Caco-2 (cell line): ENCODE measurements at regions of chrX and their contacts with region 1.

Region 1: GRCh38 chrX:101097546-101098453 is at the start of gene CENPI:
- DNase-seq: peak; percentile 94 to 95
- H3K4me3 ChIP-seq: peak within 1 kb of the TSS; percentile 63
- H3K4me3 Mint-ChIP-seq: peak within 1 kb of the TSS; percentile 86
- H3K27ac Mint-ChIP-seq: peak within 1 kb of the TSS; percentile 82
- H3K4me1 ChIP-seq: no peaks in the 10 kb centered on the region
- H3K4me1 Mint-ChIP-seq: peaks cover 17% of the 10 kb centered on the region
- H3K27me3 ChIP-seq: no peaks in the 10 kb centered on the region
- H3K27me3 Mint-ChIP-seq: no peaks in the 10 kb centered on the region
- CTCF ChIP-seq: no peak
- total RNA-seq, gene CENPI: 19.8 and 21.1 TPM in 2 replicates

Region 2: GRCh38 chrX:100895365-100896075 is 202.3 kb before region 1 on chrX:
- CTCF ChIA-PET with region 1: no interaction called
- POLR2A ChIA-PET with region 1: no interaction called
- intact Hi-C with region 1: loop called (anchors 10 kb)
- DNase-seq: peak; percentile 53
- H3K4me3 ChIP-seq: no peak overlapping the region
- H3K4me3 Mint-ChIP-seq: no peak overlapping the region
- H3K27ac Mint-ChIP-seq: no peak overlapping the region
- H3K4me1 ChIP-seq: peaks cover 7% of the 10 kb centered on the region; the same call in 1 of the 2 replicates
- H3K4me1 Mint-ChIP-seq: peaks cover 13% of the 10 kb centered on the region
- H3K27me3 ChIP-seq: no peaks in the 10 kb centered on the region
- H3K27me3 Mint-ChIP-seq: no peaks in the 10 kb centered on the region
- CTCF ChIP-seq: peak; percentile 36 to 66

Region 3: GRCh38 chrX:100928660-100929613 is 168.9 kb before region 1 on chrX and contains the start of gene XKRX:
- CTCF ChIA-PET with region 1: interaction called, 4 read pairs
- POLR2A ChIA-PET with region 1: interaction called, 7 read pairs
- intact Hi-C with region 1: loop called (anchors 1 kb)
- DNase-seq: peak; percentile 88
- H3K4me3 ChIP-seq: peak within 1 kb of the TSS; percentile 49
- H3K4me3 Mint-ChIP-seq: peak within 1 kb of the TSS; percentile 88
- H3K27ac Mint-ChIP-seq: peak within 1 kb of the TSS; percentile 83
- H3K4me1 ChIP-seq: peaks cover 13% of the 10 kb centered on the region
- H3K4me1 Mint-ChIP-seq: peaks cover 7% of the 10 kb centered on the region
- H3K27me3 ChIP-seq: no peaks in the 10 kb centered on the region
- H3K27me3 Mint-ChIP-seq: no peaks in the 10 kb centered on the region
- CTCF ChIP-seq: no peak
- total RNA-seq, gene XKRX: 28.7 and 29.7 TPM in 2 replicates

Region 4: DNA sequence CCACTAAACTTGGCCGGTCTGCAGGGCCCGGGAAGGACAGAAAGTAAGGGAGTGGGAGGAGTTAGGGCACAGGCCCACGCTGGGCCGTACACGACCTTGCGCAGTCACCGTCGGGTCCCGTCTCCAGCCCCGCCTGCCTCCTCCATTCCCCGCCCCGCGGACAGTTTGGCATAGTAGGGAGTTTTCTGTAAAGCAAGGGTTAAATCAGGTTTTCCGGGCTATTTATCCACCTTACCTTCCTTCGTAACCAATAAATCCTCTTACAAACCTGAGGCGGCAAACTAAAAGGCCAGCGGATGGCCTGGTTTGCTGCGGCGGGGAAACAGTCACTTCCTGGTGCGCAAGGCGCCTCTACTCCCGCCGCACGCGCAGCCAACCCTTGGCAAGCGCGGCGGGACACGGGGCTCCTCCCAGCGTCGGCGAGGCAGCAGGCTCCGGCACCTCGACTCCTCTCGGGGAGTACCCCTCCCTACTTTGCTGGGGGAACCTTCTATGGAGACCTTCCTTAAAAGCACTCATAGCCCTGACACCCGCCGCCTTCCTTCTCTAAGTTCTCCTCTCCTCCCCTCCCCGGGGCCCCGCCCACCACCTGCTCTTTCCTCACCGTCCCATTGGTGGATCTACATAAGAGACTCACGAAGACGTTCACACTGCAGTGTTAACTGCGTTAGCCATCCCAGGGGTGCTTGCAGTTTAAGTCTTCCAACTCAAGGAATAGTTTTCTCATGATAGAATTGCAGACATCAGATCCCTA is 46.1 kb before region 1 on chrX and contains the start of gene TRMT2B:
- CTCF ChIA-PET with region 1: no interaction called
- POLR2A ChIA-PET with region 1: no interaction called
- intact Hi-C with region 1: loop called (anchors 2 kb)
- DNase-seq: peak; percentile 78 to 80
- H3K4me3 ChIP-seq: peak within 1 kb of the TSS; percentile 67
- H3K4me3 Mint-ChIP-seq: peak within 1 kb of the TSS; percentile 87
- H3K27ac Mint-ChIP-seq: peak within 1 kb of the TSS; percentile 94
- H3K4me1 ChIP-seq: no peaks in the 10 kb centered on the region
- H3K4me1 Mint-ChIP-seq: peaks cover 1% of the 10 kb centered on the region
- H3K27me3 ChIP-seq: no peaks in the 10 kb centered on the region
- H3K27me3 Mint-ChIP-seq: no peaks in the 10 kb centered on the region
- CTCF ChIP-seq: no peak
- total RNA-seq, gene TRMT2B: 23.6 and 28.1 TPM in 2 replicates

Region 5: DNA sequence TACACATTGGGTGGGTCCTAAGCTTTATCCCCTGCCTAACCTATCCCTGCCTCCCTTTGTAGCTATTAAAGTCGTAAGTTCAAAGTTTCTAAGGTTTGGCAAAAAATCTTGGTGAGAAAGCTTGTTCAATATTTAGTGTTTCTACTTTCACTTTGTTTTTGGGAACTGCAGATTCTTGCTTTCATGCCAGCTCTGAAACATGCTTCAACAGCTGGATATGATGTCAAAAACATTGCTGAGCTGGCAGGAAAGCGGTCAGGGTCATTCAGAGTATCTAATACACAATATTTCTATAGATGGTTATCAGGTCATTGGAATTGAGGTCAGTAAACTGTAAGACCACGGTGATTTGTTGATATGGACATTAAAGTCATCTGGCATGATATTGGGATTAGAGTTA is 19.9 kb after region 1 on chrX:
- CTCF ChIA-PET with region 1: no interaction called
- POLR2A ChIA-PET with region 1: no interaction called
- intact Hi-C with region 1: no loop called
- DNase-seq: no peak
- H3K4me3 ChIP-seq: no peak overlapping the region
- H3K4me3 Mint-ChIP-seq: no peak overlapping the region
- H3K27ac Mint-ChIP-seq: no peak overlapping the region
- H3K4me1 ChIP-seq: no peaks in the 10 kb centered on the region
- H3K4me1 Mint-ChIP-seq: no peaks in the 10 kb centered on the region
- H3K27me3 ChIP-seq: no peaks in the 10 kb centered on the region
- H3K27me3 Mint-ChIP-seq: no peaks in the 10 kb centered on the region
- CTCF ChIP-seq: no peak

Region 6: DNA sequence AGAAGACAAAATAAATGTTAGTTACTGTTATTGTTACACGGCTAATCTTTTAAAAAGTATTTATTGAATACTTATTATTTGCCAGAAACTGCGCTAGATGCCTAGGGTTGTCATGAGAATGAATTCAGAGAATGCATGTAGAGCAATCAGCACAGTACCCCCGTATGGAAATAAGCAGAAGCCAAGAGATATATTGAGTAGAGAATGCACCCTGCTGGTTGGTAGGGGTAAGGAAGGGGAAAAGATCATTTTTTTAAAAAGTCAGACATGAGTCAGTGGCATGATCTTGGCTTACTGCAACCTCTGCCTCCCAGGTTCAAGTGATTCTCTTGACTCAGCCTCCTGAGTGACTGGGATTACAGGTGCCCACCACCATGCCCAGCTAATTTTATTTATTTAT is 108.7 kb after region 1 on chrX:
- CTCF ChIA-PET with region 1: no interaction called
- POLR2A ChIA-PET with region 1: interaction called, 3 read pairs
- intact Hi-C with region 1: loop called (anchors 1 kb)
- DNase-seq: peak in 1 of 2 experiments; percentile 29
- H3K4me3 ChIP-seq: no peak overlapping the region
- H3K4me3 Mint-ChIP-seq: no peak overlapping the region
- H3K27ac Mint-ChIP-seq: no peak overlapping the region
- H3K4me1 ChIP-seq: no peaks in the 10 kb centered on the region
- H3K4me1 Mint-ChIP-seq: peaks cover 7% of the 10 kb centered on the region
- H3K27me3 ChIP-seq: no peaks in the 10 kb centered on the region
- H3K27me3 Mint-ChIP-seq: no peaks in the 10 kb centered on the region
- CTCF ChIP-seq: peak; percentile 20 to 42